Uterus (tissue), 4 donors: ENCODE measurements at regions of chr6 and their contacts with region 1.

Region 1: GRCh38 chr6:16319813-16320532 is 81.6 kb downstream of the GMPR start:
- DNase-seq: peak; percentile 60 to 78
- H3K4me3 ChIP-seq: no peak overlapping the region
- H3K27ac ChIP-seq: peak overlapping the region; percentile 79 to 88
- H3K4me1 ChIP-seq: peaks cover 7 to 10% of the 10 kb centered on the region in 2 donors
- H3K27me3 ChIP-seq: no peaks in the 10 kb centered on the region
- CTCF ChIP-seq: no peak
- POLR2A ChIP-seq: no peak

Region 2: DNA sequence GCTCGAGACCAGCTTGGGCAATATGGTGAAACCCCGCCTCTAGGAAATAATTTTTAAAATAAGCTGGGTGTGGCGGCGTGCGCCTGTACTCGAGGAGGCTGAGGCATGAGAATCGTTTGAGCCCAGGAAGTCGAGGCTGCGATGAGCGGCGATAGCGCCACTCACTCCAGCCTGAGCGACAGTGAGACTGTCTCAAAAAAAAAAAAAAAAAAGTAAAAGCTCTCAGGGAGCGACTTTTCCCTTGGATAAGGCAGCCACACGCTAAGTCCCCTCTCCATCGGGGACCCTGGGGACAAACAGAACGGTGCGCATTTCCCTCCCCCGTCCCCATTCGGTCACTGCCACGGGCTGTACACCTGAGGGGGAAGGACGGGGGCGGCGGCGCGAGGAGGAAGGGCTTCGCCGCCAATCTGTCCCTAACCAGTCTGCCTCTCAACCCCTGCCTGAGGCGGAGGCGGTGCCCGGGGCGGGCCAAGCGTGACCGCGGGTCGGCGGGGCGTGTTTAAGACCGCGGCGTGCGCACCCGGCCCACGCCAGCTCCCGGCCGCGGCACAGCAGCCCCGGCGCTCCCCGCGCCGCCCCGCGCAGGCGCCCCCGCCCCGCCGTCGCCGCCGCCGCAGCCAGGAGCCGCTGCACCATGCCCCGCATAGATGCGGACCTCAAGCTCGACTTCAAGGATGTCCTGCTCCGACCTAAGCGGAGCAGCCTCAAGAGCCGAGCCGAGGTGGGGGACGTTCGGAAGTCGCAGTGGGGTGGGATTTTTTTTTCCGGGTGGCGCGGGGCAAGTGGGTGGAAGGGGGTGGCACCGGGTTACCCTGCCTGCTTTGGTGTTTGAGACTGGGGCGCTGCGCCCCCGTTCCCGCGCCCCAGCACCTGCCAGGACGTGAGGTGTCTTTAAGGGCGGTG is 81.7 kb before region 1 on chr6 and contains the start of gene GMPR:
- intact Hi-C with region 1: loop called (anchors 10 kb)
- DNase-seq: peak; percentile 72 to 74
- H3K4me3 ChIP-seq: peak within 1 kb of the TSS; percentile 63 to 91
- H3K27ac ChIP-seq: peak within 1 kb of the TSS; percentile 80 to 83
- H3K4me1 ChIP-seq: peaks cover 0 to 4% of the 10 kb centered on the region in 2 donors
- H3K27me3 ChIP-seq: no peaks in the 10 kb centered on the region
- CTCF ChIP-seq: peak in 1 of 4 experiments; percentile 12
- POLR2A ChIP-seq: peak; percentile 37 to 49
- total RNA-seq, gene GMPR: 1.5 to 18.2 (median 10.6) TPM